ENCODE measurements at regions of chr17 and their contacts with region 1.

Region 1: GRCh38 chr17:35242805-35243560 is at the start of gene SLFN5:
- DNase-seq: peak; percentile 98
- H3K4me3 ChIP-seq: peak within 1 kb of the TSS; percentile 66 to 86 (median 72)
- H3K27ac ChIP-seq: peak within 1 kb of the TSS; percentile 94 to 99 (median 96)
- H3K4me1 ChIP-seq: peaks cover 0 to 36% (median 32%) of the 10 kb centered on the region in 4 donors
- H3K27me3 ChIP-seq: no peaks in the 10 kb centered on the region
- CTCF ChIP-seq: no peak
- EP300 ChIP-seq: no peak
- POLR2A ChIP-seq: peak; percentile 95 to 96
- total RNA-seq, gene SLFN5: 23.0 to 26.2 (median 23.7) TPM

Region 2: DNA sequence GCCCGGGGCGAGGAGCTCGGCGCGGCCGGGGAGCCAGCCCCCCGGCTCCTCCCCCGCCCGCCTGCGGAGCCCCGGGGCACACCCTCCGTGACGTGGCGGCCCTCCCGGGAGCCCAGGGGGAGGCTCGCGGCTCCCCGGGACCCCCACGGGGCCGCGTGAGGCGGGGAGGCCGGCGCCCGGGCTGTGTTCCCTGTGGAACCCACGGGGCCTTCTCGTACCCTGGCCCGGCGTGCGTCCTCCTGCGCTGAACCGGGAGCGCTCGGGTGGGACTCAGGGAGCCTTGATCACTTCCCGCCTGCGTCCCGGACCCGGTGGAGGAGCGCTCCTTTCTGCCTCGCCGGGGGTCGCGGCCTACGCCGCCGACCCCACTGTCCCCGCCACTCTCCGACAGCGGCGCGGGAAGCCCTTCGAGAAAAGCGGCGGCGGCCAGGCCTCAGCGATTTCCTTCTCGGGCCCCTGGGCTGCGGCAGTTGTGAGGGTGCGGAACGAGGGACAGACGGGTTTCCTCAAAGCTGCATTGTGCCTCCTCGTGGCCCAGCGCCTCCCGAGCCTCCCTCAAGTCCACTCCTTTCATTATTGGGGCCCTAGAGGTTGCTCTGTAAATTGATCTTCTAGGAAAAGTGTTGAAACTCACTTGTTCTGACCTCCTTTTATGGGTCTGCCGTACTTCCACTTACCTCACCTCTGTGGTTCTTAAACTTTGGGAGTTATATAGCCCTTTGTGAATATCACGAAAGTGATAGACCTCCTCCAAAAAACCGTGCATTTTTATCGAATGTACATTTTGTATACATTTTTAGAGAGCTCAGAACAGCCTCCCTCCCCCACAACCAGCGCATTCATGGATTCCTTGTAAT is 262.1 kb before region 1 on chr17:
- intact Hi-C with region 1: loop called (anchors 10 kb)
- DNase-seq: peak; percentile 91
- H3K4me3 ChIP-seq: peak overlapping the region; percentile 74 to 80 (median 77)
- H3K27ac ChIP-seq: peak overlapping the region; percentile 94 to 98 (median 96)
- H3K4me1 ChIP-seq: peaks cover 0 to 36% (median 28%) of the 10 kb centered on the region in 4 donors
- H3K27me3 ChIP-seq: no peaks in the 10 kb centered on the region
- CTCF ChIP-seq: peak in 3 of 4 experiments; percentile 5 to 25 (median 23)
- EP300 ChIP-seq: no peak
- POLR2A ChIP-seq: peak in 1 of 2 donors; percentile 48

Region 3: GRCh38 chr17:35141681-35142466 is 101.1 kb before region 1 on chr17 and contains the start of gene NLE1:
- intact Hi-C with region 1: loop called (anchors 2 kb)
- DNase-seq: peak; percentile 85
- H3K4me3 ChIP-seq: peak within 1 kb of the TSS; percentile 72 to 78 (median 76)
- H3K27ac ChIP-seq: peak within 1 kb of the TSS in 2 of 4 donors; percentile 18 to 29
- H3K4me1 ChIP-seq: peaks cover 0 to 22% (median 16%) of the 10 kb centered on the region in 4 donors
- H3K27me3 ChIP-seq: no peaks in the 10 kb centered on the region
- CTCF ChIP-seq: peak; percentile 63 to 98 (median 79)
- EP300 ChIP-seq: no peak
- POLR2A ChIP-seq: no peak
- total RNA-seq, gene NLE1: 6.6 to 16.8 (median 11.4) TPM

Region 4: DNA sequence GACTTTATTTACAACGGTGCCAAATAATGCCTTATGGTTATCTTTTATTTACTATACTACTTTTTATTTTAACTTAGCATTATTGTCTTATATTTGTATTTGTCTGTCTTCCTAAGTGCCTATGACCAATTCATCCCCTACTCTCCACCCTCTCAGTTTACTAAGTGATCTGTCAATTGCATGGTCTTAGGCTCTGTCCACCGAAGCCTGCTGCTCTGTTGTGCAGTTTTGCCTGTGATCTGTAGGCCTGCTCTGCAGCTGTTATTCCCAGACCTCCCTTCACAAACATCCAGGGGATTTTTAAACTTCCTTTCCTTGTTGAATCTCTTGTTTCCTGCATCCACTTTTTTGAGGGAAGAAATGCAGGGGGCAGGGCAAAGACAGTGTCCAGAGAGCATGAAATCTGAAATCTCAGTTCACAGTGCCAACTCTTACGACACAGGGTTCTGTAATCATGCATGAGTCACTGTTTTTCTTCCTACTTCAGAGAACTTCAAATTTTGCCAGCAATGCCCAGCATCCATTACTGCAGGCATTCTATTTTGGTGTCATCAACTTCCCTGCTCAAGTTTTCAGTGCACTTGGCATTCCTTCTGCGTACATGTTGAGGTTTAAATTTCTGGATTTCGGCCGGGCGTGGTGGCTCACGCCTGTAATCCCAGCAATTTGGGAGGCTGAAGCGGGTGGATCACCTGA is 11.3 kb after region 1 on chr17:
- intact Hi-C with region 1: loop called (anchors 1 kb)
- DNase-seq: peak; percentile 89
- H3K4me3 ChIP-seq: no peak overlapping the region
- H3K27ac ChIP-seq: peak overlapping the region; percentile 75 to 85 (median 82)
- H3K4me1 ChIP-seq: peaks cover 0 to 61% (median 47%) of the 10 kb centered on the region in 4 donors
- H3K27me3 ChIP-seq: no peaks in the 10 kb centered on the region
- CTCF ChIP-seq: no peak
- EP300 ChIP-seq: peak in 1 of 4 donors; percentile 68
- POLR2A ChIP-seq: no peak

Region 5: DNA sequence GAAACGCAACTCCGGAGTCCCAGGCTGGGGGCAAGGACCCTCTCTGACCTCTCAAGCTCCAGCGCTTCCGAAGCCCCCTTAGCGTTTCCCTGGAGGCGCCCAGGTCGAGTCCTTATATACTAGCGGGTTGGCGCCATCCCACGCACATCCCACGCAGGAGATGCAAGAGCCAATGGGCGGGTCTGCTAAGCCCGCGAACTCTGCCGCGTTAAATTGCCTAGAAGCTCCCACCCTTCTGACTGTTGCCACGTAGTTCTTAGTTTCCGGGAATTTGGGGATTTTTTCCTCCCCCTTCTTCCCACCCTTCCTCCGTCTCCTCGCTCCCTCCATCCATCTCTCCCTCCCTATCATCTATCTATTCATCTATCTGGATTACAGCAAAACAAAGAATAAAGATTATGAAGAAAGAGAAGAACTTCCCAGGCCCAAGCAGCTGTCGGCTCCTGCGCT is 130.6 kb after region 1 on chr17 and contains the start of gene SLFN11:
- intact Hi-C with region 1: loop called (anchors 2 kb)
- DNase-seq: peak; percentile 97
- H3K4me3 ChIP-seq: peak within 1 kb of the TSS; percentile 52 to 67 (median 64)
- H3K27ac ChIP-seq: peak within 1 kb of the TSS; percentile 91 to 95 (median 93)
- H3K4me1 ChIP-seq: peaks cover 0 to 24% (median 0%) of the 10 kb centered on the region in 4 donors
- H3K27me3 ChIP-seq: peaks cover 0 to 24% (median 0%) of the 10 kb centered on the region in 3 donors
- CTCF ChIP-seq: no peak
- EP300 ChIP-seq: peak in 1 of 4 donors; percentile 12
- POLR2A ChIP-seq: peak; percentile 79 to 82
- total RNA-seq, gene SLFN11: 17.8 to 28.0 (median 25.7) TPM

Region 6: DNA sequence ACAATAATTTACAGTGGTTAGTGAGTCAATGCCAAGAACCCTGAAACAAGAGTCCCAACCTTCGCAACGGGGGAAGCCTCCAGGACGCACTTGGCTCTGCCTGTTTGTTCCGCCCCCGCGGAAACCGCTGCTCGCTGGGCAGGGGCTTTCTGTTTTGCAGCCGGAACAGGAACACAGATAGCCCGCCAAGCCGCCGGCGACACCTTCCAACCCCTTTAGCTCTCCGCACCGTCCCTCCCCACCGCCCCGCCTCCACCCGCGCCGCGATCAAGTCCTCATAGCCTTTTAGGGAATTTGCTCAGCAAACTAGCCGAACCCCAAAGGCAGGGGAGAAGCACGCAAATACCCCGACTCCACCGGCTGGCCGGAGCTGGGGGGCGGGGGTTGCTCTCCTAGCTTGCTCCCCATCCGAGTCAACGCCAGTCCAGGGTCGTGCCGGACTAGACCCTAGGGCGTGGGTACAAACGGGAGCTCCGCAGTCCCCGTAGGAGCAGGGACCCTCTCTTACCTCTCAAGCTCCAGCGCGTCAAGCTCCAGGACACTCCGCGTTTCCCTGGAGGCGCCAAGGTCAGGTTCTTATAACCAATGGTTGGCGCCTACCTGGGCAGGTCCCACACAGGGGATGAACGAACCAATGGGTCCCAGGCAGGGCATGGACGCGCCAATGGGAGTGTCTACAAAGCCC is 205.4 kb after region 1 on chr17 and contains the start of gene SLFN13:
- intact Hi-C with region 1: loop called (anchors 5 kb)
- DNase-seq: peak; percentile 90
- H3K4me3 ChIP-seq: peak within 1 kb of the TSS; percentile 42 to 62 (median 52)
- H3K27ac ChIP-seq: peak within 1 kb of the TSS; percentile 61 to 79 (median 74)
- H3K4me1 ChIP-seq: peaks cover 0 to 24% (median 17%) of the 10 kb centered on the region in 4 donors
- H3K27me3 ChIP-seq: peaks cover 0 to 28% (median 5%) of the 10 kb centered on the region in 3 donors
- CTCF ChIP-seq: no peak
- EP300 ChIP-seq: no peak
- POLR2A ChIP-seq: peak; percentile 19 to 29
- total RNA-seq, gene SLFN13: 11.1 to 19.9 (median 17.8) TPM

Region 7: GRCh38 chr17:36545465-36546417 is 1302.8 kb after region 1 on chr17:
- intact Hi-C with region 1: loop called (anchors 10 kb)
- DNase-seq: peak; percentile 99
- H3K4me3 ChIP-seq: peak overlapping the region; percentile 68 to 96 (median 92)
- H3K27ac ChIP-seq: peak overlapping the region; percentile 95 to 100 (median 98)
- H3K4me1 ChIP-seq: peaks cover 0 to 60% (median 54%) of the 10 kb centered on the region in 4 donors
- H3K27me3 ChIP-seq: no peaks in the 10 kb centered on the region
- CTCF ChIP-seq: no peak
- EP300 ChIP-seq: no peak
- POLR2A ChIP-seq: peak; percentile 73 to 79

Measured in sigmoid colon (tissue), 7 donors.